ENCODE measurements at regions of chr10 and their contacts with region 1.

Region 1: GRCh38 chr10:68423522-68423921 is 16.4 kb upstream of the RUFY2 start:
- DNase-seq: peak; percentile 61
- ATAC-seq: peak; percentile 95
- H3K4me3 Mint-ChIP-seq: peak overlapping the region; percentile 47
- H3K27ac Mint-ChIP-seq: peak overlapping the region; percentile 87
- H3K4me1 Mint-ChIP-seq: peaks cover 24% of the 10 kb centered on the region
- H3K27me3 Mint-ChIP-seq: no peaks in the 10 kb centered on the region

Region 2: DNA sequence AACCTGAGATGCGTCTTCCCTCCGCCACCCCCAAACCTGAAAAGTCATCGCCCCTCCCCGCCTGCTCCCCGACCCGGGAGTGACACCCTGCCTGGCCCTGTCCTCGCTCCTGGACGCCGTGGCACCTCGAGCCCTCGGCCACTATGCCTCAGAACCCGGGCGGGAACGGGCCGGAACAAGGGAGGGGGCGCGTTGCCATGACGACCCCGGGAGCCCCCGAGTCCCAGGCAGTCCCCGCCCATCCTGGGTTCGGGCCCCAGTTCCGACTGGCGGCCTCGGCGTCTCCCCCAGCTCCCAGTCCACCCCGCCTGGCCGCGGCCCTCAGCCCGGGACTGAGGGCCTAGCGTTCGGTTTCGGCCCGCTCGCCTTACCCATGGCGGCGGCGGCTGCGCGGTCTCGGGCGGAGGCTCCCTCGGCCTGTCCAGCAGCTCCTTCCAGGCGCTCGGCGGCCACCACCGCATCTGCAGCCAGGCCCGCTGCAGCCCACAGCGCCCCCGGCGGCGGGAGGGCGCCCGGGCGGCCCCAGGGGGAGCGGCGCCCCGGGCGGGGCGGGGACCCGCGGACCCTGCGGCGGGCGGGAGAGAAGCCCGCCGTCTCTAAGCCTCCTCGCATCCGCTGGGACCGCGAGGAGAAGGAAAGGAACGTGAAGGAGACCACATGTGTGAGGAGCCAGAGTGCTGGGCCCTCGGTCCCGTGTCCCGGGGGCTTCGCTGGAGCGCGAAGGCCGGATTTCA is 16.5 kb before region 1 on chr10 and contains the start of gene RUFY2:
- CTCF ChIA-PET with region 1: interaction called, 17 read pairs
- POLR2A ChIA-PET with region 1: no interaction called
- DNase-seq: peak; percentile 77
- ATAC-seq: peak; percentile 96
- H3K4me3 Mint-ChIP-seq: peak within 1 kb of the TSS; percentile 83
- H3K27ac Mint-ChIP-seq: peak within 1 kb of the TSS; percentile 81
- H3K4me1 Mint-ChIP-seq: peaks cover 17% of the 10 kb centered on the region
- H3K27me3 Mint-ChIP-seq: no peaks in the 10 kb centered on the region
- total RNA-seq, gene RUFY2: 11.4 to 12.9 TPM